ENCODE measurements at regions of chr2 and their contacts with region 1.

Region 1: DNA sequence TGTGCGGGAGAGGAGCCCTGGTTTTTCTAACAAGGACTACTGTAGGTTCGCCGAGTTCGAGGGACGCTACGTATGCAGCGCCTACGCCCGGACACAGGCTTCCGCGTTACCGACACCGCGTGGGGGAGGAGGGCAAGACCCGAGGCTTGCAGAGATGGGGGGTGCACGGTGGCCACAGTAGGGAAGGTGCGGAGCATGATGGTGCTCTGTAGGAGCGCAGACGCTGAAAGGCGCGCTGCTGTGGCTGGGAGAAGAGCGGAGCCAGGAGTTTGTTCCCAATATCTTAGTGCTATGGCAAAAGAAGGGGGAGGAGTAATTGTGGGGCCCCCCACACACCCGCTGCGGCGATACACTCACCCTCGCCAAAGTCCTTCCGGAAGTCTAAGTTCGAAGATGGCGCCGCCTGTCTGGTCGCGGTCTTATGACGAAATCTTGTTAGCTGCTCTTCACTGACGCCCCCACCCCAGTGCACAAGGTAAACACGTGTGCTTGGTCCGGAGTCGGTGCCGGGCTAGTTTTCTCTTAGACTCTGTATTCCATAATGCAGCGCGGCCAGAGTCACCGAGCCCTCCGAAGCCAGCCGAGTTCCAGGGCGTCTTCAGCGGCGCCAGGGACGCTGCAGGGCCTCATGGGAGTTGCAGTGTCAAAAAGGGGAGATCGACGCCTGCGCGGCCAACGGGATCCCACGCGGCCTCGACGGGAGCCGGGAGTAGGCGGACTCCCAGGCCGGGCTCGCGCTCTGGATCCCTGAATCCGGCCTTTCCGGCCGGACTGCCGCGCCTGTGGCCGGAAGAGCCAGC is at the start of gene GTF3C2:
- DNase-seq: peak; percentile 99
- H3K4me3 ChIP-seq: peak within 1 kb of the TSS; percentile 60
- H3K4me3 Mint-ChIP-seq: peak within 1 kb of the TSS; percentile 92
- H3K27ac Mint-ChIP-seq: peak within 1 kb of the TSS; percentile 98
- H3K4me1 ChIP-seq: peaks cover 24% of the 10 kb centered on the region
- H3K4me1 Mint-ChIP-seq: peaks cover 8% of the 10 kb centered on the region
- H3K27me3 ChIP-seq: no peaks in the 10 kb centered on the region
- H3K27me3 Mint-ChIP-seq: no peaks in the 10 kb centered on the region
- CTCF ChIP-seq: no peak
- total RNA-seq, gene GTF3C2: 81.0 and 91.4 TPM in 2 replicates

Region 2: DNA sequence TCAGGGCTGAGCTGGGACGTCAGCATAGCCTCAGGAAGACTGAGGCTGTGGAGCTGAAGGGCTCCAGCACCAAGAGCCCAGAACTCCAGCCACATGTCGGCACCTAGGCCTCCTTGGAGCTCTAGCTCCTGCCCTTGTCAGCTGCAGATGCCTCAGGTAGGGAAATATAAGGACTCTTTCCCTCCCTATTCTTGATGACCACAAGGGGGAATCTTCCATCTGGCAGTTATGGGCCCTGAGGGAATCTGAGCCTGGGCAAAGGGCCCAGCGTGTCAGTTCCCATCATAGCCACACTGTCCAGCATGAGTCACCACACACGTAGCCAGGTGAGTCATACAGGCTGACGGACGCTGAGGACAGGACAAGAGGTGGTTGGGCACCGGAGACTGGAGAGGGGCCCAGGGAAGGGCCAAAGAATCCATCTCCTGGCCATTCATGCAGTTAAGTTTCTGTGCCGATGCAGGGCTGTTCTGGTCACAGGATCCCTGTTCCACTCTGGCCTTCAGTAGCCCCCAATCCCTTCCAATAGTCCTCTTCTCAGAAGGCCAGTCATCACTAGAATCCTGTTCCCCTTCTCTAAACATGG is 35.5 kb before region 1 on chr2:
- CTCF ChIA-PET with region 1: interaction called, 6 read pairs
- POLR2A ChIA-PET with region 1: interaction called, 3 read pairs
- intact Hi-C with region 1: loop called (anchors 1 kb)
- DNase-seq: peak; percentile 91 to 95
- H3K4me3 ChIP-seq: peak overlapping the region; percentile 6; the same call in 1 of the 2 replicates
- H3K4me3 Mint-ChIP-seq: peak overlapping the region; percentile 94
- H3K27ac Mint-ChIP-seq: peak overlapping the region; percentile 99
- H3K4me1 ChIP-seq: peaks cover 19% of the 10 kb centered on the region
- H3K4me1 Mint-ChIP-seq: peaks cover 24% of the 10 kb centered on the region
- H3K27me3 ChIP-seq: no peaks in the 10 kb centered on the region
- H3K27me3 Mint-ChIP-seq: no peaks in the 10 kb centered on the region
- CTCF ChIP-seq: peak; percentile 74

Region 3: DNA sequence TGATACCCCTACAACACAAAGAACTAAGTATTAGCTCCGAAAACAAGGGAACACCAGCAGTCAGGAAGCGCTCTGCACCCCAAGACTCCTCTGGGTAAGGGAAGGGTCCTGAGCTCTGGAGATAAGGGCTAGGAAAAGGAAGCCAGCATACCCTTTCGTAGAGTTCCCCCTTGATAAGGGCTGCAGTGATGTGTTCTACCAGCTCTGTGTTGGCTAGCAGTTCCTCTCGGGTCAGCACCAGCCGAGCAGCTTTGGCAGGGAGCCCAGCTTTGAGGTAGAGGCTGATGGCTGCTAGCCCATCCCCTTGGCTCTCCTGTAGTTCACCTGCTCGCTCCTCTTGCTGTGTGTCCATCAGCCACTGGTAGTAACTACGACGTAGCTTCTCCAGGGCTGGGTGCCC is 104.5 kb after region 1 on chr2:
- CTCF ChIA-PET with region 1: no interaction called
- POLR2A ChIA-PET with region 1: no interaction called
- intact Hi-C with region 1: no loop called
- DNase-seq: no peak
- H3K4me3 ChIP-seq: no peak overlapping the region
- H3K4me3 Mint-ChIP-seq: no peak overlapping the region
- H3K27ac Mint-ChIP-seq: no peak overlapping the region
- H3K4me1 ChIP-seq: peaks cover 4% of the 10 kb centered on the region; the same call in 1 of the 2 replicates
- H3K4me1 Mint-ChIP-seq: peaks cover 7% of the 10 kb centered on the region
- H3K27me3 ChIP-seq: no peaks in the 10 kb centered on the region
- H3K27me3 Mint-ChIP-seq: no peaks in the 10 kb centered on the region
- CTCF ChIP-seq: no peak